Endothelial cell of umbilical vein (primary cell): ENCODE measurements at regions of chr5 and their contacts with region 1.

Region 1: GRCh38 chr5:136080483-136081216 is 51.9 kb downstream of the TGFBI start:
- DNase-seq: peak; percentile 96
- H3K4me3 ChIP-seq: peak overlapping the region; percentile 55 to 84 (median 68)
- H3K27ac ChIP-seq: peak overlapping the region; percentile 60
- H3K4me1 ChIP-seq: peaks cover 13% of the 10 kb centered on the region
- H3K27me3 ChIP-seq: peaks cover 15 to 27% of the 10 kb centered on the region in 2 experiments
- CTCF ChIP-seq: no peak
- POLR2A ChIP-seq: peak; percentile 41

Region 2: GRCh38 chr5:135944967-135945560 is 135.6 kb before region 1 on chr5:
- CTCF ChIA-PET with region 1: interaction called, 117 read pairs
- POLR2A ChIA-PET with region 1: no interaction called
- dilution Hi-C with region 1: no loop called
- intact Hi-C with region 1: loop called (anchors 1 kb)
- DNase-seq: peak; percentile 71
- H3K4me3 ChIP-seq: no peak overlapping the region
- H3K27ac ChIP-seq: no peak overlapping the region
- H3K4me1 ChIP-seq: no peaks in the 10 kb centered on the region
- H3K27me3 ChIP-seq: peaks cover 4 to 20% of the 10 kb centered on the region in 2 experiments
- CTCF ChIP-seq: peak; percentile 58 to 60
- POLR2A ChIP-seq: no peak

Region 3: DNA sequence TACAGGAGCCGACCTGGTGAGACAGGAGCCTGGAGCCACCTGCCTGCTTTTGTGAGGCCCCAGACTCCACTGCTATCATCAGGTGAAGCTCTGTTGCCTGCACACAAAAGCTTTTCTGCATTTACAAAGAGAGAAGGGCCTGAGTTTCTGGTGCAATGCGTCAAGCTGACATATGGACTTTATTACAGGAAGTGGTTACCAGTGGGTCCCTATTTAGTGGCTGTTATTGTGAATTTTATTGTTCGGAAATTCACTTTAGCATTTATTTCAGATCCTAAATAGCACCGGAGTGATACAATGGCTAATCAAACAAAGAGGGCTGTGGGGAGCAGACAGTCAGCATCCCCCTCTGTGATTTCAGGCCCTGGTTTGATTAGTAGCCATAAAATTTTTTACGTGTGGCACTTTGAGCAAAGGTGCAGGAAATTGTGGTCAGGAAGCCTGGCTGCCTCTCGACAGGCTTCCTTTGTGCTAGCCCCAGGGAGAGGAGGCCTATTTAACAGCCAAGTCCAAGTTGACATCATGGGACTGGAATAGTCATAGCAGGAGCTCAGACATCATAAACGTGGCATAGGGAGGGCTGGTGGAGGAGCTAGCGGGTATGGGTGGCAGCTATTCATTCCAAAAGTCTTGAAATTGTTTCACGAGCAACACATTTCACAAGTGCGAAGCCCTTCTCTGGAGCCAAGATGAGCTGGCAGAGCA is 43.5 kb before region 1 on chr5:
- CTCF ChIA-PET with region 1: interaction called, 3 read pairs
- POLR2A ChIA-PET with region 1: no interaction called
- dilution Hi-C with region 1: no loop called
- intact Hi-C with region 1: loop called (anchors 2 kb)
- DNase-seq: peak; percentile 58
- H3K4me3 ChIP-seq: no peak overlapping the region
- H3K27ac ChIP-seq: peak overlapping the region; percentile 84
- H3K4me1 ChIP-seq: peaks cover 32% of the 10 kb centered on the region
- H3K27me3 ChIP-seq: no peaks in the 10 kb centered on the region
- CTCF ChIP-seq: no peak
- POLR2A ChIP-seq: no peak

Region 4: GRCh38 chr5:136132557-136133221 is 52.0 kb after region 1 on chr5 and contains the start of gene SMAD5:
- CTCF ChIA-PET with region 1: interaction called, 7 read pairs
- POLR2A ChIA-PET with region 1: interaction called, 3 read pairs
- dilution Hi-C with region 1: no loop called
- intact Hi-C with region 1: loop called (anchors 1 kb)
- DNase-seq: peak; percentile 97
- H3K4me3 ChIP-seq: peak within 1 kb of the TSS; percentile 72 to 96 (median 83)
- H3K27ac ChIP-seq: peak within 1 kb of the TSS; percentile 78
- H3K4me1 ChIP-seq: peaks cover 15% of the 10 kb centered on the region
- H3K27me3 ChIP-seq: peaks cover 7 to 21% of the 10 kb centered on the region in 2 experiments
- CTCF ChIP-seq: no peak
- POLR2A ChIP-seq: peak; percentile 64
- total RNA-seq, gene SMAD5: 65.4 and 66.0 TPM in 2 replicates

Region 5: DNA sequence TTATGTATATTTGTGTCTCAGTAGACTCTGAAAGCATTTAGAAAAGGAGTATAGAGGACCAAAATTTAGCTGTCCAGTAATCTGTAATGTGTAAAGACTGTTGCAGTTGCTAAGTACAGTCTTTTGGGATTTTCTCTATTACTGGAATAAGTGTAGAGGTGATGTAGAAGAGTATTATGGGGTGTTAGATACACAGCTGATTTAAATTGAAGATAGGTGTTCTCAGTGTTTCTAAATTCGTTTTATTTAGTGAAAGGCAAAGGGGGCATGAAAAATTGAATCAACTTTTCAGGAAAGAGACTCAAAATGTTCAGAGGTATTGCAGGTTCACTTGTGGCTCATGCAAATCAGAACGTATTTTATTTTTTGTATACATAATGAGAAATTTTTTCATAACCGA is 65.6 kb after region 1 on chr5:
- CTCF ChIA-PET with region 1: no interaction called
- POLR2A ChIA-PET with region 1: no interaction called
- dilution Hi-C with region 1: no loop called
- intact Hi-C with region 1: no loop called
- DNase-seq: no peak
- H3K4me3 ChIP-seq: no peak overlapping the region
- H3K27ac ChIP-seq: no peak overlapping the region
- H3K4me1 ChIP-seq: no peaks in the 10 kb centered on the region
- H3K27me3 ChIP-seq: no peaks in the 10 kb centered on the region
- CTCF ChIP-seq: no peak
- POLR2A ChIP-seq: no peak

Region 6: DNA sequence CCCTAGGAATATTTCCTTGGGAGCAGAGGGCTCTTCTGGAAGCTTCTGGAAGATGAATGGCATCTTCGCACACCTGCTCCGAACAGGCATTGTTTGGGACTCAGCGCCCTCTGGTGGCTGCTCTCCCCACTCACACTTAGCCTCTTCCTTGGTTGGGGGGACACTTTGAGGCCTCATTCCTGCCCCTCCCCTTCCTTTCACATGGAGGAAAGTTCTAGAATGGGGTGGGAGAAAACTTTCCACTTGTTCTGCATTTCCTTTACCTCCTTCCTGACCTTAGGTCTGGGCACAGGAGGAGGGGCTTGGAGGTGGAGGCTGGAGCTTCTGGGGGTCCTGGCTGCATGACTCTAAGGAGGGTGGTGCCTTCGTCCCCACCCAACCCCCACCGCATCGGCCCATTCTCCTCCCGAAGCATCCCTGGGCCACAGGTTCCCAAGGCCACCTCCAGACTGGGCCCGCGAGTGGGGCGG is 131.6 kb after region 1 on chr5:
- CTCF ChIA-PET with region 1: interaction called, 4 read pairs
- POLR2A ChIA-PET with region 1: no interaction called
- dilution Hi-C with region 1: no loop called
- intact Hi-C with region 1: loop called (anchors 1 kb)
- DNase-seq: peak; percentile 37
- H3K4me3 ChIP-seq: no peak overlapping the region
- H3K27ac ChIP-seq: no peak overlapping the region
- H3K4me1 ChIP-seq: no peaks in the 10 kb centered on the region
- H3K27me3 ChIP-seq: peaks cover 3 to 5% of the 10 kb centered on the region in 2 experiments
- CTCF ChIP-seq: peak; percentile 85 to 94
- POLR2A ChIP-seq: no peak